ENCODE measurements at regions of chr3 and their contacts with region 1.

Region 1: DNA sequence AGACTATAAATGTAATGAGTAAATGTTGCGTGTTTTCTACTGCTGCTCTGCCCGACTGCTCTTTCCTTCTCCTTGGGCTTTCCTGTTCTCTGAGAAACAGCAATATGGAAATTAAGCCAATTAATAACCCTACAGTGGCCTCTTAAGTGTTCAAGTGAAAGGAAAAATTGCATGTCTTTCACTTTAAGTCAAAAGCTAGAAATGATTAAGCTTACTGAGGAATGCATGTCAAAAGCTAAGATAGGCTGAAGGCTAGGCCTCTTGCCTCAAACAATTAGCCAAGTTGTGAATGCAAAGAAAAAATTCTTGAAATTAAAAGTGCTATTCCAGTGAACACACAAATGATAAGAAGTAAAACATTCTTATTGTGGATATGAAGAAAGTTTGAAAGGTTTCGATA is 55.0 kb downstream of the ATP2C1 start:
- DNase-seq: no peak
- H3K4me3 Mint-ChIP-seq: no peak overlapping the region
- H3K27ac Mint-ChIP-seq: no peak overlapping the region
- H3K4me1 Mint-ChIP-seq: peaks cover 26% of the 10 kb centered on the region
- H3K27me3 Mint-ChIP-seq: no peaks in the 10 kb centered on the region

Region 2: GRCh38 chr3:130905551-130905950 is 43.4 kb before region 1 on chr3:
- CTCF ChIA-PET with region 1: no interaction called
- POLR2A ChIA-PET with region 1: no interaction called
- intact Hi-C with region 1: loop called (anchors 5 kb)
- DNase-seq: no peak
- H3K4me3 Mint-ChIP-seq: no peak overlapping the region
- H3K27ac Mint-ChIP-seq: no peak overlapping the region
- H3K4me1 Mint-ChIP-seq: peaks cover 55% of the 10 kb centered on the region
- H3K27me3 Mint-ChIP-seq: no peaks in the 10 kb centered on the region

Region 3: GRCh38 chr3:130997291-130997690 is 48.4 kb after region 1 on chr3:
- CTCF ChIA-PET with region 1: no interaction called
- POLR2A ChIA-PET with region 1: no interaction called
- intact Hi-C with region 1: no loop called
- DNase-seq: no peak
- H3K4me3 Mint-ChIP-seq: no peak overlapping the region
- H3K27ac Mint-ChIP-seq: no peak overlapping the region
- H3K4me1 Mint-ChIP-seq: no peaks in the 10 kb centered on the region
- H3K27me3 Mint-ChIP-seq: no peaks in the 10 kb centered on the region

Region 4: GRCh38 chr3:131047582-131047981 is 98.7 kb after region 1 on chr3:
- CTCF ChIA-PET with region 1: no interaction called
- POLR2A ChIA-PET with region 1: no interaction called
- intact Hi-C with region 1: no loop called
- DNase-seq: no peak
- H3K4me3 Mint-ChIP-seq: no peak overlapping the region
- H3K27ac Mint-ChIP-seq: no peak overlapping the region
- H3K4me1 Mint-ChIP-seq: peaks cover 8% of the 10 kb centered on the region
- H3K27me3 Mint-ChIP-seq: no peaks in the 10 kb centered on the region